Mammary epithelial cell (primary cell): ENCODE measurements at regions of chr12 and their contacts with region 1.

Region 1: GRCh38 chr12:46944088-46944487 is 118.3 kb upstream of the SLC38A4 start:
- DNase-seq: peak; percentile 70
- H3K4me3 ChIP-seq: no peak overlapping the region
- H3K27ac ChIP-seq: no peak overlapping the region
- H3K4me1 ChIP-seq: peaks cover 20% of the 10 kb centered on the region
- H3K27me3 ChIP-seq: no peaks in the 10 kb centered on the region
- CTCF ChIP-seq: peak in 1 of 2 donors; percentile 58

Region 2: GRCh38 chr12:46811185-46811584 is 132.9 kb before region 1 on chr12:
- CTCF ChIA-PET with region 1: no interaction called
- dilution Hi-C with region 1: no loop called
- in situ Hi-C with region 1: no loop called
- intact Hi-C with region 1: no loop called
- DNase-seq: no peak
- H3K4me3 ChIP-seq: no peak overlapping the region
- H3K27ac ChIP-seq: no peak overlapping the region
- H3K4me1 ChIP-seq: no peaks in the 10 kb centered on the region
- H3K27me3 ChIP-seq: no peaks in the 10 kb centered on the region
- CTCF ChIP-seq: no peak

Region 3: GRCh38 chr12:46963977-46964971 is 20.2 kb after region 1 on chr12:
- CTCF ChIA-PET with region 1: no interaction called
- dilution Hi-C with region 1: no loop called
- in situ Hi-C with region 1: no loop called
- intact Hi-C with region 1: loop called (anchors 1 kb)
- DNase-seq: peak; percentile 81
- H3K4me3 ChIP-seq: peak overlapping the region in 1 of 3 experiments; percentile 13
- H3K27ac ChIP-seq: peak overlapping the region; percentile 90
- H3K4me1 ChIP-seq: peaks cover 31% of the 10 kb centered on the region
- H3K27me3 ChIP-seq: no peaks in the 10 kb centered on the region
- CTCF ChIP-seq: no peak

Region 4: GRCh38 chr12:46983393-46984266 is 39.5 kb after region 1 on chr12:
- CTCF ChIA-PET with region 1: interaction called, 18 read pairs
- dilution Hi-C with region 1: no loop called
- in situ Hi-C with region 1: no loop called
- intact Hi-C with region 1: loop called (anchors 1 kb)
- DNase-seq: peak; percentile 60
- H3K4me3 ChIP-seq: no peak overlapping the region
- H3K27ac ChIP-seq: no peak overlapping the region
- H3K4me1 ChIP-seq: peaks cover 20% of the 10 kb centered on the region
- H3K27me3 ChIP-seq: no peaks in the 10 kb centered on the region
- CTCF ChIP-seq: peak; percentile 85 to 93